CD14-positive monocyte (primary cell): ENCODE measurements at regions of chr11 and their contacts with region 1.

Region 1: GRCh38 chr11:10925144-10925926 is 67.5 kb upstream of the ZBED5 start:
- DNase-seq: no peak
- H3K4me3 ChIP-seq: no peak overlapping the region
- H3K4me3 Mint-ChIP-seq: no peak overlapping the region
- H3K27ac ChIP-seq: no peak overlapping the region
- H3K27ac Mint-ChIP-seq: no peak overlapping the region
- H3K4me1 ChIP-seq: peaks cover 2 to 6% of the 10 kb centered on the region in 2 donors
- H3K4me1 Mint-ChIP-seq: peaks cover 8% of the 10 kb centered on the region
- H3K27me3 ChIP-seq: peaks cover 14 to 28% of the 10 kb centered on the region in 2 donors
- H3K27me3 Mint-ChIP-seq: peaks cover 21 to 37% (median 27%) of the 10 kb centered on the region in 3 donors
- CTCF ChIP-seq: no peak

Region 2: DNA sequence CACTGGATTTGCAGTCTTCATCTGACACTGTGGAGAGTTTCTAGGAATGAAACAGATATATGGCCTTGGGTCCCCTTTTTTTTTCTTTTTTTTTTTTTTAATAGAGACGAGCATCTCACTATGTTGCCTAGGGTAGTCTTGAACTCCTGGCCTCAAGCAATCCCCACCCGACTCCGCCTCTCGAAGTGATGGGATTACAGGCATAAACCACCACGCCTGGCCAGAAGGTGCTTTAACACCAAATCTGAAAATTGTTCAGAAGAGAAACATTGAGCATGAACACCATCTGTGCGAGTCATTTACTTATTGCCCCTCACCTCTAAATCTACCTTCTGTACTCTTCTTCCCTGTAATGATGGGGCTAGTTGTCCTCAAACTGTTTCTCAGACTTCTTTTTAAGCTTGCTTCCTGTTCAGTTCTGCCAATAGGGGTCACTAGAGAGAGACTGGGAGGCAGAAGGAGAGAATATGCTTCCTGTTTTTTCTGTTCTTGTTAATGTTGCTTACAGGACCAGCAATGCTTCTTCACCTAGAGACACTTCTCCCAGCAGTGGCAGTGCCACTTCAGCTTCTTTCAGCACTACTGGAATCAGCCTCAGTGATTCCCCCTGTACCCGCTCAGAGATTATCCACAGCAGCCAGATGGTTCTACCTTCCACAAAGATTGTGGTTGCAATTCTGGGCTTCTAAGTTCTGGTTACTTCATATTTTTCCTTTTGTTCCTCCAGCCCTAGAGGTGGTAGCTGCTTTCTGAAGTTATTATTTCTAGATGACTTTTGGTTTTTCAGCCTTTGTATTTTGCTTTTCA is 46.7 kb before region 1 on chr11:
- intact Hi-C with region 1: loop called (anchors 5 kb)
- DNase-seq: peak; percentile 75 to 82 (median 78)
- H3K4me3 ChIP-seq: no peak overlapping the region
- H3K4me3 Mint-ChIP-seq: no peak overlapping the region
- H3K27ac ChIP-seq: peak overlapping the region in 1 of 2 donors; percentile 61
- H3K27ac Mint-ChIP-seq: peak overlapping the region; percentile 75 to 90 (median 77)
- H3K4me1 ChIP-seq: peaks cover 3 to 7% of the 10 kb centered on the region in 2 donors
- H3K4me1 Mint-ChIP-seq: peaks cover 9% of the 10 kb centered on the region
- H3K27me3 ChIP-seq: no peaks in the 10 kb centered on the region
- H3K27me3 Mint-ChIP-seq: no peaks in the 10 kb centered on the region
- CTCF ChIP-seq: peak; percentile 86